OCI-LY7 (cell line): ENCODE measurements at regions of chr18 and their contacts with region 1.

Region 1: DNA sequence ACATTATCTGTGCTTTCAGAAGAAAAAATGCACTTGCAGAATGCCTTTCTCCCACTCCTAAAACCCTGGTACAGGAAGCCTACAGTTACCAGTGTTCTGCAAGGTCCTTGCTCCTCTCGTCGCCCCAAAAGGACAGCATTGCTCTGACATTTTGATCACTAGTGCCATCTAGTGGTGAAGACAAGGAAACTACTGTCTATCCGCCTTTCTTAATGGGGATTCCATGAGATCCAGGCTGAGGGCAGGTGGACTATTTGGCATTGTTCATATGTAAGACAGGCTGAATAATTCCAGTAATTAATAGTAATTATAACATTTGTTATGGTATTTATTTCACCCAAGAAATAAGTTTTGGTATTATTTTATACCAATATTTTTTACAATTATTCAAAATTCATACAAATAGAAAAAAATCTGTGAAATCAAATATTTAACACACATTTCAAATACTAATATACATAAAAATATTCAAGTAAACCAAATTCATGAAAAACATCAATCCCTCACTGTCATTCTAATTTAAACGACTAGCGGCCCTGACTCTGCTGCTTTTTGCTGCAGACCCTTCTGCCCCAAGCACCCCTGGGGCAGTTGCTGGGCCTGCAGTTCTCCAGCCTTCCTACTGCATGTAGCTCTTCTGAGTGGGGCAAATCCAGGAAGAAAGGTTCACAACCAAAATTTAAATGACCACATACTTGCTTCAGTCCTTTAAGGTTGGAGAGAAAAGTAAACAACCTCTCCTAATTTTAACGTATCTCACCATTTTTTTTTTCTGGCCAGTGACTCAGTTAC is 19.0 kb downstream of the TPGS2 start:
- DNase-seq: peak; percentile 63
- H3K4me3 ChIP-seq: no peak overlapping the region
- H3K27ac ChIP-seq: no peak overlapping the region
- H3K4me1 ChIP-seq: no peaks in the 10 kb centered on the region
- CTCF ChIP-seq: peak; percentile 77

Region 2: DNA sequence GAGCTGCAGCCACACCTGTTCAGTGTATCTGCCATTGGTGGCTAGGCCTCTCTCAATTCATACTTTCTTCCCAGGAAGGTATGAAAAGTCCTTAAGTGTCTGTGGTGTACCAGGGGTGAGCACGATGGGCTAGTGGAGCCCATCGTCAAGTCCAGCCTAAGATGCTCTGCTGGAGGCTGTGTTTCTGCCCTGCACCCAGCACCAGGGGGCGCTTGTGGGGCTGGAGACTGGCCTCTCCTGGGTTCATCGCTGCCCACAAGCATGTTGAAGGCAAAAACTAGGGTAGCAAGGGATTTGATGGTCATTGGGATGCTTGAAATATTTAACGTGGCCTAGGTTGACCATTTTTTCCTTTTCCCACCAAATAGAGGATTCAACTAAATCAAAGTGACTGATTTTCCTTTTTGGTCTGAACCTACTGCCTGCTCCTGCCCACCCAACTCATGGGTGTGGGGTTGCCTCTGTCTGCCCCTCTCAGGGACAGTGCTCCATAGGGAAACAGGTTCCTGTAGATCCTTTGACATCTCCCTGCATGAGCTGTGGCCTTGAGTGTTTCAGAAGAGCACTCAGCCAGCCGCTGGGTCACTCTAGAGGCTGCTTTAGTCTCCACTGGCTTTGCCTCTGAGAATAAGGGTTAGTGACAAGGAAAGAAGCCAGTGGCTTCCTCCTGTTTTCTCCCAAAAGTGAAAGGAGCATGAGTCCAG is 40.0 kb before region 1 on chr18:
- CTCF ChIA-PET with region 1: no interaction called
- POLR2A ChIA-PET with region 1: no interaction called
- intact Hi-C with region 1: loop called (anchors 5 kb)
- DNase-seq: no peak
- H3K4me3 ChIP-seq: no peak overlapping the region
- H3K27ac ChIP-seq: no peak overlapping the region
- H3K4me1 ChIP-seq: peaks cover 8% of the 10 kb centered on the region
- CTCF ChIP-seq: peak; percentile 51